Left cardiac atrium (tissue), 4 donors: ENCODE measurements at regions of chr4 and their contacts with region 1.

Region 1: DNA sequence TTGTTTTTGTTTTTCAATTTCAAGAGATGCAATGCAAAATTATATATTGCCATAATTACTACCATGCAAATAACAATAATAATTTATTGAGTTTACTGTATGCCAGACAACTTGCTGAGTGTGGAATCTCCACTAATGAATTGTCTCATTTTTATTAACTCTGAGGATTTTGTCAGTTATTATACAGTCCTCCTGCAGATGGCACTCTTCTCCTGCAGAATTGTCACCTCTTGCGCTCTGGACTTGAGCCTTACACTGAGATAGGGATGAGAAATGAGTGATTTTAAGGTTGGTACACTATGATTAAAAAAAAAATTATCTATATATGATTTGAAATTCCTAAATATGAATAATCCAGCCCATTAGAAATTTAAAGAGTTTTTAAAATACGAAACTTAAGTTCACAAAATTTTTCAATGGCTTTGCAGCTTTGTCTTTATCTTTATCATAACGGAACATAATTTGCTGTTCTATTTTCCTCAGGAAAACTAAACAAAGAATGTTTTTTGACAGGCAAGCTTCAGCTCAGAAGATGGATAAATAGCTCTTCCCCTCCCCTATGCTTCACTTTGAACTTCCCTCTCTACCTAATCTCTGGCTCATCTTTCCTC is 12.7 kb upstream of the PAQR3 start:
- DNase-seq: no peak
- ATAC-seq: peak in 1 of 2 donors; percentile 72

Region 2: DNA sequence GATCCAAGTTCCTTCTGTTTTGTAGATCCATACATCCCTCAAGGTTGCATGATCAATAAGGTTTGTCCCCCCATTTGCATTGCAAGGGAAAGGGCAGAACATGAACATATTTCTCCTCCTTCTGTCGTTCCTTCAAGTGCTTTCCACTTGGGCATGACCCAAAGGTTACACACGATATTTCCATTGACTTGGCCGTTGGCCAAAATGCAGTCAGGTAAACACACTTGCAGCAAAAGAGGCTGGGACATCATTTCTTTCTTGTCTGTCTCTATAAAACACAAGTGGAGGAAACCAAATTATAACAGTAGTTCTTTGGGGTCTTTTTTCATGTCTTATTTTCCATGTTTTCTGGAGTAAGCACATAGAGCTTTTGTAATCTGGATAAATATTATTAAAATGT is 738.8 kb before region 1 on chr4:
- intact Hi-C with region 1: no loop called
- DNase-seq: no peak
- ATAC-seq: no peak

Region 3: GRCh38 chr4:78592104-78592783 is 359.7 kb before region 1 on chr4:
- intact Hi-C with region 1: no loop called
- DNase-seq: no peak
- ATAC-seq: no peak

Region 4: GRCh38 chr4:78907638-78908037 is 44.3 kb before region 1 on chr4:
- intact Hi-C with region 1: no loop called
- DNase-seq: no peak
- ATAC-seq: no peak

Region 5: DNA sequence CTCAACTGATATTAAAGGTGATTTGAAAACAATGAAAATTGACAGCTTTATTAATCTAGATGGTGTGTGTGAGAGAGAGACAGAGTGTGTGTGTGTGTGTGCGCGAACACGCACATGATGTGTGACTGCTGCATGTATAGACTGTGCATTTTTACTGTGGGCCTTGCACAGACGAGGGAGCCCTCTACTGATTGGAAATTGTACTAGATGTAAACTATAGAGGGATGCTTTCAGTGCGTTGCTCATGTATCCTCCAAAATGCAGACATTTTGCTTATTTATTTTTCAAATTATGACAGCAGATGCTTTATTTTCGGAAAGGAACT is 624.4 kb after region 1 on chr4:
- intact Hi-C with region 1: loop called in 1 of 2 experiments (anchors 5 kb)
- DNase-seq: no peak
- ATAC-seq: peak; percentile 49 to 70

Region 6: DNA sequence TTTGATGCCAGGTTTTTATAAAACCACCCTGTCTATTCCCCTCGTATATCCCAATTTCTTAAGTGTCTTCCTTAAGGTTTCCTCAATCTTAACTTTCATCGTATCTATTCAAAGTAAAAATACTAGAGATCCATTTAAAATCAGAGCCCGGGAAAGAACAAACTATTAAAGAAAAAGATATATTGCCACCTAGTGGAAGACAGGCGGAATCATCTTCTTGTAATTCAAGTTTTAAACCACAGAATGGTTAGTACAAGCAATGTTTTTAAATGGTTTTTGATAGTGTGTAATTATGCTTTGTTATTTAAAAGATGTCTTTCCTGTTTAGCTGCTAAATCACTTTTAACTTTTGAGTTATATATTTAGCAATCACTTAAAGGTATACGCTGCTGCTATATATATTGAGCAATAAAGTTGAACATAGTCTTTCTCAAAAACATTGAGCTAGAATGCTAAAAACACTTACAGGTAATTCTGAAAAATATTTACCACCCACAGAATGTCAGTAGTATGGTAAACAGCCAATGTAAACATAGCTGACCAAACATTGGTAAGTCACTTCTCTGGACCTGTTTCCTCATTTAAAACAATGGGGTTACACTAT is 1263.6 kb after region 1 on chr4:
- intact Hi-C with region 1: loop called in 1 of 2 experiments (anchors 5 kb)
- DNase-seq: no peak
- ATAC-seq: no peak

Region 7: GRCh38 chr4:80335554-80336358 is 1383.8 kb after region 1 on chr4 and contains the start of gene CFAP299:
- intact Hi-C with region 1: loop called in 1 of 2 experiments (anchors 5 kb)
- DNase-seq: peak; percentile 87
- ATAC-seq: peak; percentile 97 to 100
- total RNA-seq, gene CFAP299: not detected